Endothelial cell of umbilical vein (primary cell): ENCODE measurements at regions of chr6 and their contacts with region 1.

Region 1: DNA sequence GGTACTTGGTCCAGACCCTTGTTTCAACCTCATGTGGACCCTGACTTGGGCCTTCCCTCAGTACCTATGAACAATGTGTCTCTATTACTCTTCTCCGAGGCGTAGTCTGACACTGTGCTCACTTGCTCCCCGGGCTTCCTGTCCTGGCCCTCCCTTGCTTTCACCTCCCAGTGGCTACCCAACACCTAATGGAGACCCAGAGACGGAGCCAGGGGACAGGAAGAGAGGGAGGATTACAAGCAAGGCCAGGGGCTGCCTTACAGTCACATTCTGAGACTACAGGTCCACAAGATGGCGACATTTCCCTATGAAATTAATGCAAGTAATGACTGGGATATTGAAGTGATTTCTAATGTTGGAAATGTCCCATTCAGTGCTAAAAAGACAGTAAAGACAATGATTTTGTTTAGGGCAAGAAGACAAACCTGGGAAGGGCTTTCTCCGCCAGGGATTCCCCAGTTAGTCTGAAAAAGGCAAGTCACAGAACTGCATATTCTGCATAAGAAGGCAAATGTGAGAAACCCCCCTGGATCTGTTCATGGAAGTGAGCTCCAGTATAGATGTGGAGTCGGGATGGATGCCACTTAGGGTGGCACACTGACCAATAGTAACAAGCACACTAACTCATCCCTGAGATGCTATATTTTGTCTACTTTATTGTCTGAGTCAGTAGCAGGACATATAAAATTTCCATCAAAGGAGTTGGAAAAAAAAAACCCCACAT is 44.0 kb upstream of the ZBTB24 start:
- DNase-seq: peak; percentile 67
- H3K4me3 ChIP-seq: no peak overlapping the region
- H3K27ac ChIP-seq: no peak overlapping the region
- H3K4me1 ChIP-seq: no peaks in the 10 kb centered on the region
- H3K27me3 ChIP-seq: no peaks in the 10 kb centered on the region
- CTCF ChIP-seq: peak; percentile 45 to 60
- POLR2A ChIP-seq: no peak

Region 2: DNA sequence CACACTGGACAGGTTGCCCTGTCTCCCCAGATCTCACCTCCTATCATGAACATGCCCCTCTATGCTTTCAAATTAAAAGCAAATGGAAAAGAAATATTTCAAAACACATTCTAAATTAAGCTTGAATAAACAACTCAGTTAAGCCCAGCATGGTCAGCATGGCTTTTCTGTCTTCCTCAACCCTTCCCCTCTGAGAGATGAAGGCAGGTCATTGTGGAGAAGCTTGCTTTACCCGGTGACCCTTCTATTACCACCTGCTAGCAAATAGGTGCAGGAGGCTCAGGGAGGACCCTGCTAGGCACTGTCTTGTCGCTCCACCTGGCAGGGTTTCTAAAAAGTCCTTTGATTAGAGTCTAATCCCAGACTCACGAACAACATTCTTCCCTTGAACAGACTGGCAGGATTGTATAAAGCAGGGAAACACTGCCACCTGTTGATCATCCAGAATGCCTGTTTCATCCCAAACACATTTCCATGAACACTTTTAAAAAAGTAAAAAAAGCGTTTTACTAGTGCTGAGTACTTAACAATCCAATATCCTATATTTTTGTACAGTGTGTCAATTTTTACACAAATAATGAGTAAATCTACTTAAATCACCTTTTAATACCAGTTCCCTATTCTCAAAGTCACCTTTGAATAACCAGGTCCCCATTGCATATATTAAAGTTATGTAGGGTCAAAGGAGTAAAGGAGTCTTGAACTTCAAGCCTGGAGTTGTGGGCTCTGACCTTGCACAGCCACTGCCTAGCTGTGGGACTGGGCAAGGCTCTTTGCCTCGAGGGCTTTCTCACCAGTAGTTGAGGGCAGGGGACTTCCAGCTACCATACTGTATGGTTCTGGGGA is 526.6 kb after region 1 on chr6:
- CTCF ChIA-PET with region 1: interaction called, 9 read pairs
- POLR2A ChIA-PET with region 1: no interaction called
- dilution Hi-C with region 1: no loop called
- intact Hi-C with region 1: loop called (anchors 1 kb)
- DNase-seq: peak; percentile 44
- H3K4me3 ChIP-seq: no peak overlapping the region
- H3K27ac ChIP-seq: no peak overlapping the region
- H3K4me1 ChIP-seq: no peaks in the 10 kb centered on the region
- H3K27me3 ChIP-seq: peaks cover 3 to 29% of the 10 kb centered on the region in 2 experiments
- CTCF ChIP-seq: peak; percentile 56 to 63
- POLR2A ChIP-seq: no peak